GM12878 (cell line): ENCODE measurements at regions of chr4 and their contacts with region 1.

Region 1: DNA sequence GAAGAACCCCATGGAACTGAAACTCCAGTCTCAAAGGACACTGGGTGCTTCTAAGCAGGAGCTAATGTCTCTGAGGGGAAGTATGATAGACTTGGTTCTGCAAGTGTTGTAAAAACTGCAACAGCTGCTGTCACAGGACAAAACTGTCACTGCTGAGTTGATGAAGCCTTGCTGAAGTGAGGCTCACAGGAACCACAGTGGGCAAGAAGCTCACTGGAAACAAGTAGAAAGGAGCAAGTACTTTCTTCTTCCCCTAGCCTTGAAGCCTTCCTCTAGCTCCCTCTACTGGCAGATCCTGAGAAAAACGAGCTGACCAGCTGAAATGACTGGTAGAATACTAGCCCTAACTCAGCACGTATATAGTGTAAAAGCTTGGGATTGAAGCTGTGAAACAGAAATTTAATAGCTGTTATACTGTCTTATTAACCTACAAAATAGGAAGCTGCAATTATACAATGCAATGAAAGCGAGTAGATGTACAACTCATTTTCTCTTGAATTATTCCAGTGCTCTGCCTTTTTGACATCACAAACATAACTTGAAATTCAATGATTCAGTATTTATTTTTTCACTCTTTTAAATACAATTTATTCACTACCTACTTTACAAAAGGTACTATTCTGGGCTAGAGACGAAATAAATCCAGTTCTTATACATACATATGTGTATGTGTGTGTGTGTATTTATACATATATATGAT is 91.4 kb downstream of the GABRB1 start:
- DNase-seq: peak; percentile 21
- ATAC-seq: peak; percentile 94
- H3K4me3 ChIP-seq: no peak overlapping the region
- H3K27ac ChIP-seq: no peak overlapping the region
- H3K4me1 ChIP-seq: no peaks in the 10 kb centered on the region
- H3K27me3 ChIP-seq: no peaks in the 10 kb centered on the region
- CTCF ChIP-seq: peak; percentile 84 to 91 (median 90)
- EP300 ChIP-seq: 0 out of 4 replicates have a peak, but pooled peaks of 1 of the 2 experiments have one; percentile 24
- POLR2A ChIP-seq: no peak
- RAD21 ChIP-seq: peak; percentile 83

Region 2: GRCh38 chr4:46922205-46922604 is 200.5 kb before region 1 on chr4:
- CTCF ChIA-PET with region 1: interaction called, 4 read pairs
- POLR2A ChIA-PET with region 1: no interaction called
- RAD21 ChIA-PET with region 1: interaction called, 7 read pairs
- SMC1A ChIA-PET with region 1: interaction called, 17 read pairs
- in situ Hi-C with region 1: no loop called
- intact Hi-C with region 1: no loop called
- DNase-seq: no peak
- ATAC-seq: no peak
- H3K4me3 ChIP-seq: no peak overlapping the region
- H3K27ac ChIP-seq: no peak overlapping the region
- H3K4me1 ChIP-seq: no peaks in the 10 kb centered on the region
- H3K27me3 ChIP-seq: no peaks in the 10 kb centered on the region
- CTCF ChIP-seq: no peak
- EP300 ChIP-seq: no peak
- POLR2A ChIP-seq: no peak
- RAD21 ChIP-seq: no peak

Region 3: DNA sequence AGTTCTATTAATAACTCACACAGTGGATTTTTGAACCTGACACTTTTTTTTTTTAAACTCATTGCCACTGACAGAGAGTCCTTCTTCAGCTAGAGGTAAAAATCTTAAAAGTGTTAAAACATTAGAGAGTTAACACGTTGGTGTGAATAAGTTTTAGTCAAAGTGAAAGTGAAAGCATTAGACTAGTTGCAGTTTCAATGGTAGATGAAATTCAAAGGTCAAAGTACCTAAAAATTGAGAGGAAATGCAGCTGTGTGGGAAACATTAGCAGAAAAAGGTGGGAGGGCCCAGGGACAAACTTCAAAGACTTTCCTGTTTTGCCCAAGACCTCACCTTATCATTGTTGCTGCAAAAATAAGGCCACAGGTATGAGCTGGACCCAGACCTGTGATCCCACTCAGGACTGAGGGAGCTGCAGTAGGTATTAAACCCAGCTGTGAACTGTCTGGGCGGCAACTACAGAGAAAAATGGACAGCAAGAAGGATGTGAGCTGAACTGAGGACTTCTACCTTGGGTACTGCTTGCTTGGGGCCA is 111.8 kb before region 1 on chr4:
- CTCF ChIA-PET with region 1: interaction called, 16 read pairs
- POLR2A ChIA-PET with region 1: no interaction called
- RAD21 ChIA-PET with region 1: interaction called, 18 read pairs
- SMC1A ChIA-PET with region 1: interaction called, 16 read pairs
- in situ Hi-C with region 1: no loop called
- intact Hi-C with region 1: no loop called
- DNase-seq: peak; percentile 54
- ATAC-seq: peak; percentile 86
- H3K4me3 ChIP-seq: no peak overlapping the region
- H3K27ac ChIP-seq: peak overlapping the region; percentile 8; the same call in 1 of the 2 replicates
- H3K4me1 ChIP-seq: peaks cover 4% of the 10 kb centered on the region; the same call in 1 of the 2 replicates
- H3K27me3 ChIP-seq: no peaks in the 10 kb centered on the region
- CTCF ChIP-seq: no peak
- EP300 ChIP-seq: peak; percentile 38 to 51; a peak in 2 of 4 replicates
- POLR2A ChIP-seq: no peak
- RAD21 ChIP-seq: no peak

Region 4: DNA sequence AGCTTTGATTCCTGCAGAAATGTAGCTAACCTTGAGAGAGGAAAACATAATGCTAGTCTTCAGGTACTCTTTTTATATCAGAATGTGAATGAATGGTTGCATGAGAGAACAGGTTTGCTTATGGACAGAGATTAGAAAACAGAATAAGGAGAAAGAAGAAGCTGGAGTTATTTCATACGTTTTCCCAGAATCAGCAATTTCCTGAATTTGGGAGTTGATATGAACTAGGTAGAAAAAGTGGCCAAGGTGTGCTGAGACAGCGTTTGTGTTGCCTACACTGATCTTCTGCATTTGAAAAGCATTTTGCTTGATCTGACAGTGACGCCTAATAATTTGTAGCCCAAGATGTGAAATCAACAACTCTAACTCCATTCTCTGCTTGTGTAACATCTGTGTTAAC is 78.9 kb before region 1 on chr4:
- CTCF ChIA-PET with region 1: interaction called, 14 read pairs
- POLR2A ChIA-PET with region 1: no interaction called
- RAD21 ChIA-PET with region 1: interaction called, 5 read pairs
- SMC1A ChIA-PET with region 1: interaction called, 11 read pairs
- in situ Hi-C with region 1: no loop called
- intact Hi-C with region 1: no loop called
- DNase-seq: no peak
- ATAC-seq: no peak
- H3K4me3 ChIP-seq: no peak overlapping the region
- H3K27ac ChIP-seq: no peak overlapping the region
- H3K4me1 ChIP-seq: no peaks in the 10 kb centered on the region
- H3K27me3 ChIP-seq: no peaks in the 10 kb centered on the region; a peak in 1 of 4 replicates
- CTCF ChIP-seq: no peak
- EP300 ChIP-seq: no peak
- POLR2A ChIP-seq: no peak
- RAD21 ChIP-seq: no peak

Region 5: GRCh38 chr4:47135210-47135609 is 12.5 kb after region 1 on chr4:
- CTCF ChIA-PET with region 1: interaction called, 21 read pairs
- POLR2A ChIA-PET with region 1: no interaction called
- RAD21 ChIA-PET with region 1: no interaction called
- SMC1A ChIA-PET with region 1: interaction called, 5 read pairs
- in situ Hi-C with region 1: no loop called
- intact Hi-C with region 1: no loop called
- DNase-seq: no peak
- ATAC-seq: no peak
- H3K4me3 ChIP-seq: no peak overlapping the region
- H3K27ac ChIP-seq: no peak overlapping the region
- H3K4me1 ChIP-seq: no peaks in the 10 kb centered on the region
- H3K27me3 ChIP-seq: no peaks in the 10 kb centered on the region; a peak in 1 of 4 replicates
- CTCF ChIP-seq: no peak
- EP300 ChIP-seq: no peak
- POLR2A ChIP-seq: no peak
- RAD21 ChIP-seq: no peak

Region 6: DNA sequence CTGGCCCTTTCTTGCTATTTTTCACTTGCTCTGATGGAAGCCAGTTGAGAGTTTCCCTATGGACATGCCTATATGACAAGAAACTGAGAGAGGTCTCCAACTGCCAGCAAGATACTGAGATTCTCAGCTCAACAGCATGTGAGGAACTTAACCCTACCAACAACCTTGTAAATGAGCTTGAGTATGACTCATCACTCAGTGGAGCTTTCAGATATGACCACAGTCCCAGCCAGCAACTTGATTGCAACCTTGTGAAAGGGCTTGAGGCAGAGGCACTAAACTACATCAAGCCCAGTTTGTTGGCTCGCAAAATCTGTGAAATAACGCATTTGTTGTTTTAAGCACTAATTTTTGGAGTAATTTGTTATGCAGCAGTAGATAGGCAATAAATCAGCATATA is 165.0 kb after region 1 on chr4:
- CTCF ChIA-PET with region 1: no interaction called
- POLR2A ChIA-PET with region 1: no interaction called
- RAD21 ChIA-PET with region 1: no interaction called
- SMC1A ChIA-PET with region 1: no interaction called
- in situ Hi-C with region 1: no loop called
- intact Hi-C with region 1: no loop called
- DNase-seq: peak; percentile 12
- ATAC-seq: peak; percentile 96
- H3K4me3 ChIP-seq: no peak overlapping the region
- H3K27ac ChIP-seq: no peak overlapping the region
- H3K4me1 ChIP-seq: no peaks in the 10 kb centered on the region
- H3K27me3 ChIP-seq: no peaks in the 10 kb centered on the region
- CTCF ChIP-seq: no peak
- EP300 ChIP-seq: no peak
- POLR2A ChIP-seq: no peak
- RAD21 ChIP-seq: no peak

Region 7: DNA sequence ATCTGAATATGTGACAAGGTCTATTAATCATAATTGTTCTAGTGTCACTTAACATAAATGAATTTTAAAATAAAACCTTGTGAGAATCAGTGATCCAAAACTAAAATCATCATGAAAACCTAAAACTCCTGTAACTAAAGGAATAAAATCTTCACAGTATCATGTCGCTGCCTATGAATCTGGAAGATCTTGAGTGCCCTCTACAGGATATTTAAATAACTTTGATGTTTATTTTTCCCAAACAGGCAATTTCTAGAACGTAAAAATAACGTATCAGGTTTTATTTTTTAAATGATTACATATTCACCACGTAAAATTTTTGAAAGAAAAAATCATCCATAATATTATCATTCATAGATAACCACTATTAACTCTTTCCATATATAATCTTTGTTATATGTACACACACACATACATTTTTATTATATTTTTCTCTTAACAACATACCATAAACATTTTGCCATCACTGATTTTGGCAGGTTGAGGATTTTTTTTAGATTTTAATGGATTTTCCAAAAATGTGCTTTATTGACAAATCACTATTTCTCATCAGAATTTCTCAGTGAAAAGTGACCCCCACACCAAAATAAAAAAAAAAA is 261.2 kb after region 1 on chr4:
- CTCF ChIA-PET with region 1: interaction called, 26 read pairs
- POLR2A ChIA-PET with region 1: no interaction called
- RAD21 ChIA-PET with region 1: interaction called, 10 read pairs
- SMC1A ChIA-PET with region 1: interaction called, 8 read pairs
- in situ Hi-C with region 1: no loop called
- intact Hi-C with region 1: loop called (anchors 2 kb)
- DNase-seq: no peak
- ATAC-seq: peak; percentile 44; the same call in 2 of the 3 replicates
- H3K4me3 ChIP-seq: no peak overlapping the region
- H3K27ac ChIP-seq: no peak overlapping the region
- H3K4me1 ChIP-seq: no peaks in the 10 kb centered on the region
- H3K27me3 ChIP-seq: no peaks in the 10 kb centered on the region
- CTCF ChIP-seq: peak; percentile 19 to 59 (median 37); a peak in 4 of 6 replicates
- EP300 ChIP-seq: no peak
- POLR2A ChIP-seq: no peak
- RAD21 ChIP-seq: peak; percentile 83